AG04449 (cell line): ENCODE measurements at regions of chr9 and their contacts with region 1.

Region 1: DNA sequence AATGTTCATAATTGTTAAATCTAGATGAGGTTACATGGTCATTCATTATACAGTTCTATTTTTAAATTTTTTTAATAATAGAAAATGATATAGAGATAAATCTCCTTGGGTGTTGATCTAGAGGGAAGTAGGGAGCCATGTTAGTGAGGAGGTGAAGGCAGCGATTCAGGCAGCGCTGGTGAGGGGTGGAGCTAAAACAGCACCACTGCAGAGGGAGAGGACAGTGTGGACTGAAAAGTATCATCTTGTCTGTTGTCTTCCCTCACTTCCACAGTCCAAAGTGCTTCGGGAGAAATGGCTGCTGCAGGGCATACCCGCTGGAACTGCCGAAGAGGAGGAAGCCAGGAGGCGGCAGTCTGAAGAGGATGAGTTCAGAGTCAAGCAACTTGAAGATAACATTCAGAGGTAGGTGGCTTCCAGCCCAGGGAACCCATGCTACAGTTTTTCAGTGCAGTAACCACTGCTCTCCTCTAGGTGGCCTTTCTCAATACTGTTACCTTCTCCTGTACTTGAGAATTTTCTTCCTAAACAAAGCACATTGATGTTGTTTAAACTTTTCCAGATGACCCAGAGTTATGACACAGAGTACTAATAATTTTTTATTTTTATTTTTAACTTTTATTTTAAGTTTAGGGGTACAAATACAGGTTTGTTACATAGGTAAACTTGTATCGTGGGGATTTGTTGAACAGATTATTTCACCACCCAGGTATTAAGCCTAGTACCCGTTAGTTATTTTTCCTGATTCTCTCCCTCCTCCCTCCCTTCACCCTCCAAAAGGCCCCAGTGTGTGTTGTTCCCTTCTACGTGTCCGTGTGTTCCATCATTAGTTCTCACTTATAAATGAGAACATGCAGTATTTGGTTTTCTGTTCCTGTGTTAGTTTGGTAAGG is 100.5 kb downstream of the PALM2AKAP2 start:
- DNase-seq: no peak
- H3K4me3 ChIP-seq: no peak overlapping the region
- CTCF ChIP-seq: peak; percentile 60

Region 2: DNA sequence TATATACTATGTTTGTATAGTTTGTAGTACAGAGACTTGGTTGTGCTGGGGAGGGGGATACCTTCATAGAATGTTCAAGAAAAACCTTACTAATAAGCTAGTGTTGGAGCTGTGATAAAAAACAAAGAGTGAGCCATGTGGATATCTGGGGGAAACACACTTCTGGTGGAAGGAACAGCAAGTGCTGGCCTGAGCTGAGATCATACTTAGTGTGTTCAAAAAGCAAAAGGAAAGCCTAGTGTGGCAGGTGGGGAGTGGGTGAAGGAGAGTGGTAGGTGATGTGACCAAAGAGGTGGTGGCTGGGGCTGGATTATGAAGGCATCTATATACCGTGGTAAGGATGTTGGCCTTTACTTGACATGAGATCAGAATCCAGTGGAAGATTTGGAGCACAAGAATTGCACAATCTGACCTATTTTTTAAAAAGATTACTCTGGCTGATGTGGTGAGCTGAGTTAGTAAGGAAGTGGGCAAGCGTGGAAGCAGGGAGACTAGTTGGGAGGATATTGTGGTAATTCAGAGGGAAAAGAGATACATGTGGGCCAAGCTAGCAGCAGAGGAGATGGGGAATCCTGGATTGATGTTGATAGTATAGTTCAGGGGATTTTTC is 73.9 kb before region 1 on chr9:
- CTCF ChIA-PET with region 1: no interaction called
- POLR2A ChIA-PET with region 1: no interaction called
- DNase-seq: no peak
- H3K4me3 ChIP-seq: no peak overlapping the region
- CTCF ChIP-seq: no peak

Region 3: DNA sequence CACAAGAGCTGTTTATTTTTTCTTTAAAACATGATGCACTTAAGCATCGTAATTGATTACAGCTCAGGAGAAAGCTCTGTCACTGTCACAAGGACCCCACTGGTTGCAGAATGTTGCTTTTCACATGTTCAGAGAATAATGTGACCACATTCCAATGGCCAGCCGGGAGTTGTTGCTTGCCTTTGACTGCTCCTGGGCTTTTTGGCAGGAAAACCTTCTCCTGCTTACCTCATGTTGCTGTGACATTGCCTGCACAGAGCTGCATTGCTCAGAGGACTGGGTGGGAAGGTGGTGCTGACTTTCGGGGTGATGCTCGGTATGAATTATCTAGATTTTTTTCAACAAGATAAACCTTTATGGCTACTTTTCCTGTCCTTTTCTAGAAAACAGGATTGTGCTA is 12.3 kb before region 1 on chr9:
- CTCF ChIA-PET with region 1: interaction called, 18 read pairs
- POLR2A ChIA-PET with region 1: no interaction called
- DNase-seq: no peak
- H3K4me3 ChIP-seq: no peak overlapping the region
- CTCF ChIP-seq: no peak

Region 4: GRCh38 chr9:109893241-109893640 is 12.7 kb after region 1 on chr9:
- CTCF ChIA-PET with region 1: interaction called, 11 read pairs
- POLR2A ChIA-PET with region 1: no interaction called
- DNase-seq: no peak
- H3K4me3 ChIP-seq: no peak overlapping the region
- CTCF ChIP-seq: no peak